ENCODE measurements at regions of chr17 and their contacts with region 1.

Region 1: GRCh38 chr17:32936894-32937500 is 9.0 kb downstream of the TMEM98 start:
- DNase-seq: peak; percentile 36
- H3K4me3 Mint-ChIP-seq: no peak overlapping the region
- H3K27ac Mint-ChIP-seq: no peak overlapping the region
- H3K4me1 Mint-ChIP-seq: peaks cover 6% of the 10 kb centered on the region
- H3K27me3 Mint-ChIP-seq: peaks cover 17% of the 10 kb centered on the region

Region 2: DNA sequence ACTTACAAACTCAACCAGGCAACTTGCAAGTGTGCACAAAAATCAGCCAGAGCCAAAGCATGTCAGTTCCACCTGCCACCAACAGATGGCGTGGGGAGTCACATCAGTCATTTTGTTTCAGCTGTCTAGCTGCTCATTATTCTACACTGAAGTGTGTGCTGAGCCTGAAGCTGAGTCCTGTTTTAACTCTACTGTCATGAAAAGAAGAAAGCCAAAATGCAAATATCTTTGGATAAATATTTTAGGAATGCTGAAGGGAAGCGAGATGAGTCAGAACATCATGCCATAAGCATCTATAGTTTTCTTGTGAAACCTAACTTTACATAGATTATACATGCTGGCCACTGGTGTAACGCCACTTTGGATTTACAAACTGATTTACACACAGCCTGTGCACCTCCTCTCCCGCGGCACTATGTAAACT is 277.6 kb before region 1 on chr17:
- intact Hi-C with region 1: loop called (anchors 1 kb)
- DNase-seq: peak; percentile 43
- H3K4me3 Mint-ChIP-seq: no peak overlapping the region
- H3K27ac Mint-ChIP-seq: no peak overlapping the region
- H3K4me1 Mint-ChIP-seq: no peaks in the 10 kb centered on the region
- H3K27me3 Mint-ChIP-seq: peaks cover 2% of the 10 kb centered on the region

Region 3: GRCh38 chr17:32783602-32784001 is 153.4 kb before region 1 on chr17:
- intact Hi-C with region 1: loop called (anchors 1 kb)
- DNase-seq: no peak
- H3K4me3 Mint-ChIP-seq: no peak overlapping the region
- H3K27ac Mint-ChIP-seq: no peak overlapping the region
- H3K4me1 Mint-ChIP-seq: no peaks in the 10 kb centered on the region
- H3K27me3 Mint-ChIP-seq: peaks cover 19% of the 10 kb centered on the region

Region 4: DNA sequence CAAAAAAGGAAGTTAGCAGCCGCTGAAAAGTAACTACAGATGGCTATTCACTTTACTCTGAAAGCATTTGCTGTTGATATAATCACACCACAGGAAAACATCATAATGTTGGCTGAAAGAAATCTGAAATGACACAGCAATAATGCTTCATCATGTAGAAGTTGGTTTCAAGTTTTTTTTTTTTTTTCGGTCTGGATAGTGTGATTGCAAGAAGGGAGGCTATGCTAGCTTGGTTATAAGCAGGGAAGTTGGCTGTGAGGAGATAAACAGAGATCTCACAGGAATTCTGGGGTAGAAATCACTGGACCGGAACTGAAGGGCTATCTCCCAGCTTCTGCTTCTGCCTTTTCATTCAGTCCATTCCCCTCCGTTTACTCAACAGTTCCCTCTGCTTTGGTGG is 118.0 kb before region 1 on chr17:
- intact Hi-C with region 1: no loop called
- DNase-seq: no peak
- H3K4me3 Mint-ChIP-seq: no peak overlapping the region
- H3K27ac Mint-ChIP-seq: no peak overlapping the region
- H3K4me1 Mint-ChIP-seq: no peaks in the 10 kb centered on the region
- H3K27me3 Mint-ChIP-seq: peaks cover 16% of the 10 kb centered on the region

Region 5: GRCh38 chr17:32997753-32998632 is 61.0 kb after region 1 on chr17:
- intact Hi-C with region 1: loop called (anchors 2 kb)
- DNase-seq: peak; percentile 49
- H3K4me3 Mint-ChIP-seq: no peak overlapping the region
- H3K27ac Mint-ChIP-seq: no peak overlapping the region
- H3K4me1 Mint-ChIP-seq: no peaks in the 10 kb centered on the region
- H3K27me3 Mint-ChIP-seq: peaks cover 22% of the 10 kb centered on the region

Measured in activated T-helper 1 cell treated with anti-CD3 and anti-CD28 coated beads, Interleukin-12 subunit alpha, Interleukin-12 subunit beta, Interleukin-2, Interleukin-4 antibody, amounts not matched to agents 30 ng/mL and 10 ng/mL and 1 ng/mL, durations not matched to agents 14 hours and 24 hours and 36 hours (primary cell).